CD8-positive, alpha-beta T cell (primary cell): ENCODE measurements at regions of chr17 and their contacts with region 1.

Region 1: GRCh38 chr17:66397486-66397885 is 95.1 kb downstream of the PRKCA start:
- DNase-seq: peak in 2 of 9 experiments; percentile 22 to 32
- ATAC-seq: peak; percentile 30
- H3K4me3 ChIP-seq: no peak overlapping the region
- H3K4me3 Mint-ChIP-seq: peak overlapping the region; percentile 33
- H3K27ac ChIP-seq: peak overlapping the region in 1 of 2 experiments; percentile 37
- H3K27ac Mint-ChIP-seq: peak overlapping the region; percentile 90
- H3K4me1 ChIP-seq: peaks cover 87% of the 10 kb centered on the region
- H3K4me1 Mint-ChIP-seq: peaks cover 77% of the 10 kb centered on the region
- H3K27me3 ChIP-seq: no peaks in the 10 kb centered on the region
- H3K27me3 Mint-ChIP-seq: no peaks in the 10 kb centered on the region
- CTCF ChIP-seq: no peak

Region 2: GRCh38 chr17:66337866-66338485 is 59.5 kb before region 1 on chr17:
- CTCF ChIA-PET with region 1: no interaction called
- POLR2A ChIA-PET with region 1: interaction called, 3 read pairs
- intact Hi-C with region 1: loop called in 1 of 2 experiments (anchors 5 kb)
- DNase-seq: no peak
- ATAC-seq: no peak
- H3K4me3 ChIP-seq: no peak overlapping the region
- H3K4me3 Mint-ChIP-seq: no peak overlapping the region
- H3K27ac ChIP-seq: no peak overlapping the region
- H3K27ac Mint-ChIP-seq: peak overlapping the region; percentile 52
- H3K4me1 ChIP-seq: peaks cover 72% of the 10 kb centered on the region
- H3K4me1 Mint-ChIP-seq: peaks cover 76% of the 10 kb centered on the region
- H3K27me3 ChIP-seq: no peaks in the 10 kb centered on the region
- H3K27me3 Mint-ChIP-seq: no peaks in the 10 kb centered on the region
- CTCF ChIP-seq: no peak

Region 3: GRCh38 chr17:68359791-68360535 is 1962.5 kb after region 1 on chr17:
- CTCF ChIA-PET with region 1: no interaction called
- POLR2A ChIA-PET with region 1: no interaction called
- intact Hi-C with region 1: no loop called
- DNase-seq: no peak
- ATAC-seq: no peak
- H3K4me3 ChIP-seq: no peak overlapping the region
- H3K4me3 Mint-ChIP-seq: no peak overlapping the region
- H3K27ac ChIP-seq: no peak overlapping the region
- H3K27ac Mint-ChIP-seq: no peak overlapping the region
- H3K4me1 ChIP-seq: peaks cover 26% of the 10 kb centered on the region
- H3K4me1 Mint-ChIP-seq: peaks cover 35% of the 10 kb centered on the region
- H3K27me3 ChIP-seq: no peaks in the 10 kb centered on the region
- H3K27me3 Mint-ChIP-seq: no peaks in the 10 kb centered on the region
- CTCF ChIP-seq: no peak